HepG2 (cell line): ENCODE measurements at regions of chr9 and their contacts with region 1.

Region 1: GRCh38 chr9:97921959-97922724 is at the start of gene TRMO:
- DNase-seq: peak; percentile 93
- ATAC-seq: peak; percentile 90
- H3K4me3 ChIP-seq: peak within 1 kb of the TSS; percentile 67 to 79 (median 69)
- H3K27ac ChIP-seq: peak within 1 kb of the TSS; percentile 96
- H3K4me1 ChIP-seq: peaks cover 30% of the 10 kb centered on the region
- H3K27me3 ChIP-seq: peaks cover 0 to 6% of the 10 kb centered on the region in 2 experiments; a peak in 2 of 5 replicates
- CTCF ChIP-seq: peak; percentile 96
- EP300 ChIP-seq: peak in 1 of 2 experiments; percentile 39; a peak in 1 of 4 replicates
- POLR2A ChIP-seq: peak; percentile 87 to 98
- RAD21 ChIP-seq: peak; percentile 73
- total RNA-seq, gene TRMO: 18.6 and 21.5 TPM in 2 replicates

Region 2: GRCh38 chr9:97696803-97697601 is 225.1 kb before region 1 on chr9 and contains the start of gene XPA:
- CTCF ChIA-PET with region 1: no interaction called
- POLR2A ChIA-PET with region 1: interaction called, 11 read pairs
- in situ Hi-C with region 1: no loop called
- intact Hi-C with region 1: no loop called
- DNase-seq: peak; percentile 92
- ATAC-seq: peak; percentile 95
- H3K4me3 ChIP-seq: peak within 1 kb of the TSS; percentile 83 to 86 (median 85)
- H3K27ac ChIP-seq: peak within 1 kb of the TSS; percentile 82
- H3K4me1 ChIP-seq: peaks cover 66% of the 10 kb centered on the region
- H3K27me3 ChIP-seq: no peaks in the 10 kb centered on the region
- CTCF ChIP-seq: no peak
- EP300 ChIP-seq: no peak
- POLR2A ChIP-seq: peak; percentile 87 to 94
- RAD21 ChIP-seq: peak; percentile 63
- total RNA-seq, gene XPA: 12.5 and 15.2 TPM in 2 replicates

Region 3: GRCh38 chr9:97866848-97867247 is 55.3 kb before region 1 on chr9:
- CTCF ChIA-PET with region 1: no interaction called
- POLR2A ChIA-PET with region 1: no interaction called
- in situ Hi-C with region 1: no loop called
- intact Hi-C with region 1: no loop called
- DNase-seq: no peak
- ATAC-seq: no peak
- H3K4me3 ChIP-seq: no peak overlapping the region
- H3K27ac ChIP-seq: no peak overlapping the region
- H3K4me1 ChIP-seq: no peaks in the 10 kb centered on the region
- H3K27me3 ChIP-seq: peaks cover 0 to 7% of the 10 kb centered on the region in 2 experiments; a peak in 1 of 5 replicates
- CTCF ChIP-seq: no peak
- EP300 ChIP-seq: no peak
- POLR2A ChIP-seq: no peak
- RAD21 ChIP-seq: no peak

Region 4: DNA sequence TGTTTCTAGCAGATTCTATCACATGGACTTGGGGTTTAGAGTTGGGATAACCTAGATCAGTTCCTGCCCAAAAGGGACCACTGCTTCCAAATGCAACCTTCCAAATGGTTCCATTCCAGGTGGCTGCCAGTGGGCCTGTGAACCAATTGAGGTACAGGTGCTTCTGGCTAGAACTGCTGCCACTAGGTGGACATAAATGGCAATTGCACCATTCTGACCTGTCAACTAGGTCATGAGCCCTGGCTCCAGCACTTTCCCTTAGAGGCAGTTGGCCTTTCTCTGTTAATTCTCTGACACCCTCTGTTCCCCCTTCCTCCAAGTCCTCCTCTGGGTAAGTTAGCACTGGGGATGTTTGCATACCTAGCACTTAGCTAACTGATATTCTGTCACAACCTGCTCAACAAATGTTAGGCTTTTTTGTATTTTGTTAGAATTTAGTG is 32.4 kb after region 1 on chr9:
- CTCF ChIA-PET with region 1: interaction called, 34 read pairs
- POLR2A ChIA-PET with region 1: interaction called, 15 read pairs
- in situ Hi-C with region 1: no loop called
- intact Hi-C with region 1: loop called (anchors 1 kb)
- DNase-seq: peak; percentile 52
- ATAC-seq: peak; percentile 96
- H3K4me3 ChIP-seq: no peak overlapping the region
- H3K27ac ChIP-seq: no peak overlapping the region
- H3K4me1 ChIP-seq: no peaks in the 10 kb centered on the region
- H3K27me3 ChIP-seq: peaks cover 0 to 4% of the 10 kb centered on the region in 2 experiments; a peak in 1 of 5 replicates
- CTCF ChIP-seq: peak; percentile 81
- EP300 ChIP-seq: no peak
- POLR2A ChIP-seq: no peak
- RAD21 ChIP-seq: peak; percentile 38; the same call in 1 of the 2 replicates

Region 5: GRCh38 chr9:98020476-98021145 is 98.5 kb after region 1 on chr9:
- CTCF ChIA-PET with region 1: no interaction called
- POLR2A ChIA-PET with region 1: no interaction called
- in situ Hi-C with region 1: no loop called
- intact Hi-C with region 1: no loop called
- DNase-seq: no peak
- ATAC-seq: peak; percentile 27
- H3K4me3 ChIP-seq: no peak overlapping the region
- H3K27ac ChIP-seq: no peak overlapping the region
- H3K4me1 ChIP-seq: no peaks in the 10 kb centered on the region
- H3K27me3 ChIP-seq: no peaks in the 10 kb centered on the region
- CTCF ChIP-seq: no peak
- EP300 ChIP-seq: no peak
- POLR2A ChIP-seq: no peak
- RAD21 ChIP-seq: no peak

Region 6: DNA sequence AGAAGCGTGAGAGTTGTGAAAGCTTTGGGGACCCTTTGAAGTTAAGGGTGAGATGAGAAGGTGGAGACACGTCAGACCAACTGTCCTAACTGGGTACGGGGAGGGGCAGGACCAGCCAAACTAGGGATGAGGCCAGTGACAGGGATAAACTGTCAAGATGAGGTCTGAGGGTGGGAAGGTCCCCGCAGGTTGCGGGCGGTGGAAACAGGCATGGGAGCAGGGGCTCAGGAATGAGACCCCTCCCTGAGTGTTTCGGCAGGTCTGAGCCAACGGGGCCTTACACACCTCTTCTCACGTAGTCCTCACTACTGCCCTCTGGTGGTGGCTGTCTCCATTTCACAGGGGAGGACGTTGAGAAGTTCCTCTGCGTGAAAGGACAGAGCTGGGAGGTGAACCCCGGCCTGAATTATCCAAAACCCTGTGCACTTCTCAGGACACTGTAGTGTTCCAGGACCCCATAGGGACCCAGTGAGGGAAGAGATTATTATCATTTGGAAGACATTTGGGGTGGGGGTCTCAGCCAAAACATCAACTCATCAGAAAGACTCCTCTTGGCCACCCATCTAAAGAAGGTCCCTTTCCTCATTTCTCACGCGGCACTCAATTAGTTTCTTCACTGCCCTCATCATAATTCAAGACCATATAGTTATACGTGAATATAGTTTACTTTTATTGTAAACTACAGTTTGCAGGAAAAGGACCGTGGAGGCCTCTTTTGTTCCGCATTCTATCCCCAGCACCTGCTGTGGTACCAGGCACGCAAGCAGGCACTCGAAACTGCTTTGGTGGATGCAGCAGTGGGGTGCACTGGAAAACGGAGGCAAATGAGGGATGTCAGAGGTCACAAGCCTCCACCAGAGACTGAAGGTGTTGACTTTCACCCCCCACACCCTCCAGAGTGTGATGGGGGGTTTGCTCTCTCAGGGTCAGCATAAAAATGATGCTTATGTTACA is 112.7 kb after region 1 on chr9:
- CTCF ChIA-PET with region 1: interaction called, 33 read pairs
- POLR2A ChIA-PET with region 1: interaction called, 3 read pairs
- in situ Hi-C with region 1: loop called (anchors 10 kb)
- intact Hi-C with region 1: loop called (anchors 1 kb)
- DNase-seq: peak; percentile 76
- ATAC-seq: peak; percentile 94
- H3K4me3 ChIP-seq: peak overlapping the region in 1 of 3 experiments; percentile 75; a peak in 2 of 6 replicates
- H3K27ac ChIP-seq: no peak overlapping the region
- H3K4me1 ChIP-seq: peaks cover 25% of the 10 kb centered on the region
- H3K27me3 ChIP-seq: peaks cover 0 to 13% of the 10 kb centered on the region in 2 experiments; a peak in 2 of 5 replicates
- CTCF ChIP-seq: peak; percentile 87
- EP300 ChIP-seq: no peak
- POLR2A ChIP-seq: no peak
- RAD21 ChIP-seq: no peak

Region 7: DNA sequence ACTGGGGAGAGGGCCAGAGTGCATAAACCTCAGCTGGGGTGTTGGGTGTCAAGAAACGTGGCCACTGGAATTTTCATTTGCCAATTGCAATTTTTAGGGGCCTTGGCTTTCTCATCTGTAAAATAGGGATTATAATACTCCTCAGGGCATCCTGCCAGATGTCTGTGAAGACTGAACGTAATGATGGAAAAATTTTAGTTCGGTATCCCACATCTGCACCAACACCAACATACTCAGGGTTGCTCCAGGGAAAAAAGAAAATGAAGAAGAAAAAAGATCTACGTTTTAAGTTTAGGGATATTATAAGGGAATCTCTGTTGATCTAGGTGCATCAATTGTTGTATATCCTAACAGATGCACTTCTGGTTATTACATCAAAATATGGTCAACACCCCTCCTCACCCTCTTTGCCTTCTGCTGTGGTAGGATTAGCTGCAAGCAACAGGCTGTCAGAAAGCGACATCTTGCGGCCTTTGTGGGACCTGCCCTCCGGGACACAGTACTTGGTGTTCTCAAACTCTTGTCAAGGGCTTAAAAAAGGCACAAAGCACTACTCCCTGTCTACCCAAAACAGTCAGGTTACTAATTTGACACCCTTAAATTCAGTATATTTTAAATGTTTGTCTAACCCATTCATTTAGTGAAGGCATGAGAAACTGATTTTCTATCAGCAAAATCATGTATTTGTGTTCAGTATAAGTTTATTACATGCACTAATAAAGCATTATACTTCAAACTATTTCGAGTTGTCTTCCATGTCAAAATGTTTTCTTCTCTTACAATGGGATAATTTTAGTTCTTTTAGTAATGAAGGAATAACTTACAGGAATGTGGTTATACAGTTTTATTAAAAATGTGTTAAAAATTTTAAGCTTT is 341.6 kb after region 1 on chr9:
- CTCF ChIA-PET with region 1: interaction called, 9 read pairs
- POLR2A ChIA-PET with region 1: no interaction called
- in situ Hi-C with region 1: no loop called
- intact Hi-C with region 1: loop called (anchors 5 kb)
- DNase-seq: peak; percentile 61
- ATAC-seq: peak; percentile 100
- H3K4me3 ChIP-seq: no peak overlapping the region
- H3K27ac ChIP-seq: no peak overlapping the region
- H3K4me1 ChIP-seq: peaks cover 18% of the 10 kb centered on the region
- H3K27me3 ChIP-seq: peaks cover 0 to under 1% of the 10 kb centered on the region in 2 experiments; a peak in 1 of 5 replicates
- CTCF ChIP-seq: peak; percentile 95
- EP300 ChIP-seq: no peak
- POLR2A ChIP-seq: no peak
- RAD21 ChIP-seq: peak; percentile 88